Activated naive CD4-positive, alpha-beta T cell treated with anti-CD3 and anti-CD28 coated beads for 36 hours (primary cell): ENCODE measurements at regions of chr6 and their contacts with region 1.

Region 1: GRCh38 chr6:110528101-110528929 is 51.9 kb upstream of the SLC22A16 start:
- DNase-seq: peak; percentile 75
- H3K4me3 Mint-ChIP-seq: no peak overlapping the region
- H3K27ac Mint-ChIP-seq: no peak overlapping the region
- H3K4me1 Mint-ChIP-seq: no peaks in the 10 kb centered on the region
- H3K27me3 Mint-ChIP-seq: no peaks in the 10 kb centered on the region

Region 2: DNA sequence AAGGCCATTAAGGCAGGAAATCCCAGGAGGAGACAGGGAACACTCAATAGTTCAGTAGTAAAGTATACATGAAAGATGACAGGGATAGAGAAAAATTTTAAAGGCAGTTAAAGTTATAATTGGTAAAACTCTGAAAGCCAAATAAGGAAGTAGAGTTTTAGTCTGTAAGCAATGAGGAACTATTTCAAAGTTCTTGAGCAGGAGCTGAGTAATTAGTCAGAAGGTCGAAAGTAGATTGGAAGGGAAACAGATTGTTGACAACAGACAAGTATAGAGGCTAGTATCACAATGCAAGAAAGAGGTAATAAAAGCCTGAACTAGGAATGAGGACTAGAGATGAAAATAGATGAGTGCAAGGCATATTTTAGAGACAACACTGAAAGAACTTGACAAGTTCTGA is 136.6 kb after region 1 on chr6:
- CTCF ChIA-PET with region 1: no interaction called
- intact Hi-C with region 1: loop called (anchors 5 kb)
- DNase-seq: no peak
- H3K4me3 Mint-ChIP-seq: no peak overlapping the region
- H3K27ac Mint-ChIP-seq: no peak overlapping the region
- H3K4me1 Mint-ChIP-seq: no peaks in the 10 kb centered on the region
- H3K27me3 Mint-ChIP-seq: no peaks in the 10 kb centered on the region

Region 3: GRCh38 chr6:110949679-110950285 is 421.5 kb after region 1 on chr6:
- CTCF ChIA-PET with region 1: interaction called, 31 read pairs
- intact Hi-C with region 1: loop called (anchors 1 kb)
- DNase-seq: no peak
- H3K4me3 Mint-ChIP-seq: no peak overlapping the region
- H3K27ac Mint-ChIP-seq: no peak overlapping the region
- H3K4me1 Mint-ChIP-seq: peaks cover 2% of the 10 kb centered on the region
- H3K27me3 Mint-ChIP-seq: no peaks in the 10 kb centered on the region

Region 4: DNA sequence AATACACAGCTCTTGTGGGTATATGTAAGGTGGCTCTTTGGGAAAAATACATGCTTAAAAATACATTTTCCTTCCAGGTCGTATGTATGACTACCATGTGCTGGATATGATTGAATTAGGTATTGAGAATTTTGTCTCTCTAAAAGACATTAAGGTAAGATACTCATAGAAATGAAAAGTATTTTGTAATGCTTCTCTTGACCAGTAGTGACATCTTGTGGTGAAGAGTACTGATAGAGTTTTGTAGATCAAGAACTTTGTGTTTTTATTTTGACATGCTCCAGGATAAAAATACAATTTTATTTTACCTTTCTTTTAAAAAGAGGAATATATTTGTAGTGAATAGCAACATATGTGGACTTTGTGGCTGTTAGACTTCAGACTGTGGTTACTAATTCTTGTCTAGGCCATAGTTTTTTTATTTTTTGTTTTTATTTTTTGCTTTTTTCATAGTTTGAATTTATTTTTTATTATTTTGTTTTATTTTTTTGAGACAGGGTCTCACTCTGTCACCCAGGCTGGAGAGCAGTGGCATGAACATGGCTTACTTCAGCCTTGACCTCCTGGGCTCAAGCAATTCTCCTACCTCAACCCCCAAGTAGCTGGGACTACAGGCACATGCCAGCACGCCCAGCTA is 471.4 kb after region 1 on chr6:
- CTCF ChIA-PET with region 1: interaction called, 4 read pairs
- intact Hi-C with region 1: loop called (anchors 5 kb)
- DNase-seq: no peak
- H3K4me3 Mint-ChIP-seq: no peak overlapping the region
- H3K27ac Mint-ChIP-seq: no peak overlapping the region
- H3K4me1 Mint-ChIP-seq: peaks cover 2% of the 10 kb centered on the region
- H3K27me3 Mint-ChIP-seq: no peaks in the 10 kb centered on the region